ENCODE measurements at regions of chr2 and their contacts with region 1.

Region 1: DNA sequence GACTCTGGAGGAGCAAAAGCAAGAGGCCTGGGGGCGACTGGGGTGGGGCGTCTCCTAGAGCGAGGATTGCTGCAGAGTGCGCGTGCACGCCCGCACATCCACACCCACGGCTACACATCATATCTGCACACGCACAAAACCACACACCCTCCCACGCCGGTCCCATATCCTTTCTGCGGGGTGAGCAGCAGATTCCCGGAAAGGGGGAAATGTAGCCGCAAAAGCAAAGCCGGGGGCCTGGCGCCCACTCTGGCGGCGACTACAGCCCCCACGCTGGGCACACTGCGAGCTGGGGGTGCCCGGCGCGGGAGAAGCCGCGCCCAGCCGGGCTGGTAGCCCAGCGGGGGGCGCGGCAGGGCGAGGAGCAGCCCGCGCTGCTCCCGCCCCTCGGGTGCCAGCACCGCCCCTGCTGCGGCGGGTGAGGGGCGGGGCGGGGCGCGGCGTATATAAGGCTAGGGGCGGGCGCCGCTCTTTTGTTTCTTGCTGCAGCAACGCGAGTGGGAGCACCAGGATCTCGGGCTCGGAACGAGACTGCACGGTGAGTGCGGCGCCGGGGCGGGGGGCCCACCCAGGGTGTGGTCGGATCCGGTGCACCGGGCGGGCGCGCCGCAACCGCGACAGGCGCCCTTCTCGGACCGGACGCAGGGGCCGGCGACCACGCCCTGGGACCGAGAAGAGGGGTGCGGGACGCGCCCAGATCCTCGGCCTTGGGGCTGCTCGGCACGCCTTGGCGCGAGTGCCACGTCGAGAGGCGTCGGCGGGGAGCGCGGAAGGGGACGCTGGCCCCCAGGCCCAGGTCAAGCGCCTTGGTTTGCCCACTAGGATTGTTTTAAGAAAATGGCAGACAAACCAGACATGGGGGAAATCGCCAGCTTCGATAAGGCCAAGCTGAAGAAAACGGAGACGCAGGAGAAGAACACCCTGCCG is at the start of gene TMSB10:
- DNase-seq: peak; percentile 90

Region 2: GRCh38 chr2:84919885-84920580 is 14.6 kb after region 1 on chr2:
- CTCF ChIA-PET with region 1: interaction called, 20 read pairs
- POLR2A ChIA-PET with region 1: interaction called, 34 read pairs
- DNase-seq: no peak

Region 3: DNA sequence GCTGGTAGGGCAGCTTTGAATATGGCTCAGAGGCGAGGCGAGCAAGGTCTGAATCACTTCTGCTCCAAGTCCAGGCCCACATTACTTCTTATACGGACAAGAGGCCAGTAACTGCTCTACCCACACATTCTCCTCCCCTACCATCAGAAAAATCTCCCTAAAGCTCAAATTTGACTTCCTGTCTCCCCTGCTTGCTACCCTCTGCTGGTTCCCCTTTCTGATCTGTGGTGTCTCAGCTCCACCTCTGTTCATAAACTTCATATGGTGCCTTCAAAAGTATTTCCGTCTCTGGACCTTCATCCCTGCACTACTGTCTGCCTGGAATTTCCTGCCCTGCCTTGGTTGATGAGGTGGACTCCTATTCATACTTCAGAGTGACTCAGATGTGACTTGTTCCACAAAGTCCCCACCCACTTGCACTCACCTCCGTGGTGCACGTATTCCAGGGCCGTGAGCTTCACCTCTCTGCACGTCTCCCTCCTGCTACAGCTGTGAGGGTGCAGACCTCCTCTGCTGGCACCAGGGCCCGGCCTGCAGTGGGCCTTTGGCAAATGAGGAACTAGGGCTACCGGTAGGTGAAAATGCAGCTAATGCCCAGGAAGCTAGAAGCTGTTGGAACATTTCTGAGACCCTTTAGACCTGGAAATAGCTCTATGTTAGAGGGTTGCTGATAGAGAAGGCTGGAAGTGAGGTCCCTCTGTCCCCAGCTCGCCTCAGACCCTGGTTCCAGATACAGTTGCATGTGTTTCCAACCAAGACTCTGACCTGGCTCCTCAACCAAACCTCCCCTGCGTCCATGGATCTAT is 41.0 kb after region 1 on chr2:
- CTCF ChIA-PET with region 1: no interaction called
- POLR2A ChIA-PET with region 1: no interaction called
- DNase-seq: no peak